Activated T-helper 2 cell treated with anti-CD3 and anti-CD28 coated beads, Interferon-gamma antibody, Interleukin-2, Interleukin-4, amounts not matched to agents 10 μg/mL and 5 μg/mL and 100 μg/mL, durations not matched to agents 14 hours and 24 hours and 36 hours (primary cell): ENCODE measurements at regions of chr1 and their contacts with region 1.

Region 1: GRCh38 chr1:2545759-2546514 is 10.2 kb upstream of the TNFRSF14 start:
- DNase-seq: peak; percentile 86
- H3K4me3 Mint-ChIP-seq: peak overlapping the region; percentile 85
- H3K27ac Mint-ChIP-seq: no peak overlapping the region
- H3K4me1 Mint-ChIP-seq: peaks cover 15% of the 10 kb centered on the region
- H3K27me3 Mint-ChIP-seq: peaks cover 7% of the 10 kb centered on the region

Region 2: DNA sequence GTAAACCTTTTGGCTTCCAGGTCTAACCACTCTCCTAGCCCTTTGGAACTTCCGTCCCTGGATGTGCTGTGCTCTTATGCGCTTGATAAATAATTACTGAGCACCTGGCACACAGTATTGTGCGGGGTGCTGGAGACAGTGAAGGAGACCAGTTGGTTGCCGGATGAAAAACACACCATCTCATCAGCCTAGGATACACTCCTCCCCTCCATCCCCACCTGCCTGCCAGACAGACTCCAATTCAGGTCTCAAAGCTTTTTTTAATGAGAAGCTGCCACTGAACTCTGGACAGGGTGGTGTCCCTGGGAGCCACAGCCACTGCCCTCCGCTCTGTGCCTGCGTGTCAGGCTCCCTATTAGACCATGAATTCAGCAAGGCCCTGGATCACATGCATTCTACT is 664.2 kb before region 1 on chr1:
- intact Hi-C with region 1: no loop called
- DNase-seq: no peak
- H3K4me3 Mint-ChIP-seq: no peak overlapping the region
- H3K27ac Mint-ChIP-seq: no peak overlapping the region
- H3K4me1 Mint-ChIP-seq: peaks cover 37% of the 10 kb centered on the region
- H3K27me3 Mint-ChIP-seq: no peaks in the 10 kb centered on the region

Region 3: GRCh38 chr1:2586154-2587070 is 40.5 kb after region 1 on chr1 and contains the start of gene PRXL2B:
- intact Hi-C with region 1: loop called (anchors 1 kb)
- DNase-seq: peak; percentile 98
- H3K4me3 Mint-ChIP-seq: peak within 1 kb of the TSS; percentile 84
- H3K27ac Mint-ChIP-seq: peak within 1 kb of the TSS; percentile 86
- H3K4me1 Mint-ChIP-seq: peaks cover 33% of the 10 kb centered on the region
- H3K27me3 Mint-ChIP-seq: no peaks in the 10 kb centered on the region
- total RNA-seq, gene PRXL2B: 26.5 and 28.4 TPM in 2 replicates

Region 4: DNA sequence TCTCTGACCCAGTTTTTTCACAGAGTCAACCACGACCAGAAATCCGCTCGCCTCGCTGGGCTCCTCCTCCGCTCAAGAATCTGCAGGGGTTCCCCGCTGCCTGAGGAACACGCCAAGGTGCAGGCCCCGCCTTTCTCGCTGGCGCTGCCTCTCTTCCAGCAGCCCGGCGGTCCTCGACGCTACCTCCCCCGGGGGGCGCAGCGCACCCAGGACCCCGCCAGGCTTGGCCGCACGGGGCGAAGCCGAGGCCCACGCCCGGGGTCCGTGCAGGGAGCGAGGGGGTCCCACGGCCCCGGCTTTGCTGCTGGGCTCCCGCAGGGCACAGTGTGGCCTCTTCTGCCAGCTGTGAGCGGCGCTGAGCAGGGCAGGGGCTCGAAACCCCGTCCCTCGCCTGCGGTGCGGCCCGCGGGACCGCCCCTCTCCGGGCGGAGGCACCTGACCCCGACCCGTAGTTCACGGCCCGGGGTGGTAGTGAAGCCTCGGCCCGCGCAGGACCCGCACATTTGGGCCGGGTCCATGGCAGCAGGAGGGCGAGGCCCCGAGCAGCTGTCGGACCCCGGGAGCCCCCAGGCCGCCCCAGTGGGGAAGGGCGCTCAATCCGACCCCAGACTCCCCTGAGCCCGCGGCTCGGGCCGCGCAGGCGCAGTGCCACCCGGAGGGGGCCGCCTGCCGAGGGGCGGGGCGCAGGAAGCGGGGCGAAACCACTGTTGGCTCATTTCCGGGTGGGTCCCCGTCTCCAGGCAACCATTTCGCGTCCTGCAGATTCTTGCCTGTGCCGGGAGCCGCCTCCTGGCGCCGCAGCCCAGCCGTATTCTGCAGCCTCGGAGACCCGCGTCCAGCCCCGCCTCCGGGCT is 96.8 kb after region 1 on chr1:
- intact Hi-C with region 1: loop called (anchors 10 kb)
- DNase-seq: peak; percentile 92
- H3K4me3 Mint-ChIP-seq: peak overlapping the region; percentile 85
- H3K27ac Mint-ChIP-seq: peak overlapping the region; percentile 88
- H3K4me1 Mint-ChIP-seq: no peaks in the 10 kb centered on the region
- H3K27me3 Mint-ChIP-seq: no peaks in the 10 kb centered on the region